Common myeloid progenitor, CD34-positive (primary cell): ENCODE measurements at regions of chr2 and their contacts with region 1.

Region 1: DNA sequence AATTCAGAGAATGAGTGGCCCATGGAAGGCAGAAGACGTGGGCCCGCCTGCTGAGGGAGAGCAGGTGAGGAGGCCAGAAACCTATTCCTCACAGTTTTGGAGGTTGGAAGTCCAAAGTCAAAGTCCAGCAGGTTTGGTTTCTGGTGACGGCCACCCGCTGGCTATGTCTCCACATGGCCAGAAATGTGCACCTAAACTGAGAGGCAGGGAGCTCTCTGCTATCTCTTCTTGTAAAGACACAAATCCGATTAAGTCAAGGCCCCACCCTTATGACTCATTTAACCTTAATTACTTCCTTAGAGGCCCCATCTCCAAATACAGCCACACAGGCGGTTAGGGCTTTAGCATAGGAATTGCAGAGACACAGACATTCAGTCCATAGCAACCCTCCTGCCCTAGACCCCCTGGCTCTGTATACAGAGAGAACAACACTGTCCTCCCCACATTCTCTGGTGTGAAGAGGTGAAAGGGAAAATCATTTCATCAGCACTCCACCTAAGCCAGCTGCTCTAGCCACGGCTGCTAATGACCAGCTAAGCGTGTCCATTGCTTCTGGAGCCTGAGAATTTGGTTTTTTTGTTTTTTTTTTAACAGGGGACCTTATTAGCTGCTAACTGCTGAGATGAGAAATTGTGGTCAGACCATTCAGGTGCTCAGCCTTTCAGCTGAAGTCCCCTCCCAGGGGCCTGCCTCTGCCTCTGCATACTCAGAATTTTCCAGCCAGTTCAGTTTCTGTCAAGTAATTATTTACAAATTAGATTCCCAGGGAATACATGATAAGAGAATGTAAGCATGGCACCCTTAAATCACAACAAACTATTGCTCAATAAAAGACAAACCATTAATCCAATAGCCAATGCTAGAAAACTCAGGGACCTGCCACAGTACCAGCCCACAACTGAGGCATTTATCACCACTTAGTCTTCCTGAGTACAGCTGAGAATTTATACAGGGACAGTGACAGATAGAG is 368.7 kb upstream of the ID2 start:
- DNase-seq: peak in 2 of 3 donors; percentile 82 to 90
- H3K4me3 ChIP-seq: no peak overlapping the region
- H3K27ac ChIP-seq: no peak overlapping the region
- H3K4me1 ChIP-seq: peaks cover 21 to 62% (median 46%) of the 10 kb centered on the region in 4 experiments
- H3K27me3 ChIP-seq: no peaks in the 10 kb centered on the region

Region 2: DNA sequence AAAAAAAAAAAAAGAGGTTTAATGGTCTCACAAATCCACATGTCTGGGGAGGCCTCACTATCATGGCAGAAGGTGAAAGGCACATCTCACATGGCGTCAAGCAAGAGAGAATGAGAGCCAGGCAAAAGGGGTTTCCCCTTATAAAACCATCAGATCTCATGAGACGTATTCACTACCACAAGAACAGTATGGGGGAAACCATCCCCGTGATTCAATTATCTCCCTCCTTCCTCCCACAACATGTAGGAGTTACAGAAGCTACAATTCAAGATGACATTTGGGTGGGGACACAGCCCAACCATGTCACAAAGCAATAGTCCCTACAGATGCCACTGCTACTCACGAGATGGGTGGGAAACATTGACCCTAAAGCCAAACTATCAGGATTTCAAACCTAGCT is 24.0 kb before region 1 on chr2:
- CTCF ChIA-PET with region 1: no interaction called
- POLR2A ChIA-PET with region 1: no interaction called
- DNase-seq: no peak
- H3K4me3 ChIP-seq: no peak overlapping the region
- H3K27ac ChIP-seq: no peak overlapping the region
- H3K4me1 ChIP-seq: no peaks in the 10 kb centered on the region
- H3K27me3 ChIP-seq: no peaks in the 10 kb centered on the region

Region 3: DNA sequence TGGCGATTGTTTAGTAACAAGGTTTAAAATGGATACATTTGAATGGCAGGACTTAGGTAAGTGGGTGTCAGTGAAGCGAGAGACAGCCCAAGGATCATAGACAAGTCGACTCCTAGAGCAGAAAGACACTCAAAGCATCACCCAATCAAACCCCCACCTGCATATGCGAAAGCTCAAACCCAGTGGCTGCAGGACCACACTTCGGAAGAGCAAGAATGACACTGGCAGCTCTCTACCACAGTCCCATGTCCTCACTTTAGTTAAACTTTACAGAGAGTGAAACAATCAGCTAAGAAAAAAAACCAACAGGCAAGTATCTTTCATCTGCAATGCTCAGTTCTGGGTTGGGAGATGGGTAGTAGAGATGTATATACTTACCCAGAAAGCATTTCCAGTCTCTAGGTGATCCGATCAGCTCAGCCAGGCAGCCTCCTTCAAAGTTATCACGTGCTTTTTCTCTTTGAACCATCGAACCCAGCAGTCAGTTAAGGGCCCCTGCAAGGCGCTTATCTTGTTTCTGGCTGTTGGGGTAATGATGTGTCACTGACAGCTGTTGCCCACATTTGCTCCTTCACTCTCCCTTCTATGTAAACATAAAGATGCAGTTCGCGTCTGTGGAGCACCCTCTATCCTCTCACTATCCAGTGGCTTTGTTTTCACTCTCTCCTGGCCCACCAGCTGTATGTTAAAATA is 11.2 kb after region 1 on chr2:
- CTCF ChIA-PET with region 1: interaction called, 36 read pairs
- POLR2A ChIA-PET with region 1: interaction called, 4 read pairs
- DNase-seq: peak in 2 of 3 donors; percentile 69 to 83
- H3K4me3 ChIP-seq: no peak overlapping the region
- H3K27ac ChIP-seq: no peak overlapping the region
- H3K4me1 ChIP-seq: peaks cover 12 to 41% (median 23%) of the 10 kb centered on the region in 4 experiments
- H3K27me3 ChIP-seq: no peaks in the 10 kb centered on the region